ENCODE measurements at regions of chr10 and their contacts with region 1.

Region 1: GRCh38 chr10:13099666-13100348 is at the start of gene OPTN:
- DNase-seq: peak; percentile 82 to 90 (median 84)
- H3K4me3 ChIP-seq: peak within 1 kb of the TSS; percentile 58 to 65
- H3K4me3 Mint-ChIP-seq: peak within 1 kb of the TSS; percentile 89 to 95 (median 94)
- H3K27ac ChIP-seq: peak within 1 kb of the TSS; percentile 98
- H3K27ac Mint-ChIP-seq: peak within 1 kb of the TSS; percentile 95 to 98 (median 97)
- H3K4me1 ChIP-seq: peaks cover 49% of the 10 kb centered on the region
- H3K4me1 Mint-ChIP-seq: peaks cover 40 to 59% (median 48%) of the 10 kb centered on the region in 4 donors
- H3K27me3 ChIP-seq: no peaks in the 10 kb centered on the region
- H3K27me3 Mint-ChIP-seq: no peaks in the 10 kb centered on the region
- total RNA-seq, gene OPTN: 148 TPM

Region 2: GRCh38 chr10:12214763-12215218 is 885.0 kb before region 1 on chr10:
- CTCF ChIA-PET with region 1: no interaction called
- POLR2A ChIA-PET with region 1: no interaction called
- intact Hi-C with region 1: loop called (anchors 5 kb)
- DNase-seq: peak; percentile 45 to 54 (median 53)
- H3K4me3 ChIP-seq: no peak overlapping the region
- H3K4me3 Mint-ChIP-seq: peak overlapping the region; percentile 48 to 79 (median 68)
- H3K27ac ChIP-seq: peak overlapping the region; percentile 22
- H3K27ac Mint-ChIP-seq: peak overlapping the region; percentile 45 to 94 (median 89)
- H3K4me1 ChIP-seq: peaks cover 6% of the 10 kb centered on the region
- H3K4me1 Mint-ChIP-seq: peaks cover 10 to 20% (median 16%) of the 10 kb centered on the region in 4 donors
- H3K27me3 ChIP-seq: no peaks in the 10 kb centered on the region
- H3K27me3 Mint-ChIP-seq: no peaks in the 10 kb centered on the region

Region 3: GRCh38 chr10:12448729-12449391 is 650.9 kb before region 1 on chr10:
- CTCF ChIA-PET with region 1: no interaction called
- POLR2A ChIA-PET with region 1: no interaction called
- intact Hi-C with region 1: loop called (anchors 2 kb)
- DNase-seq: peak; percentile 87 to 94 (median 92)
- H3K4me3 ChIP-seq: peak overlapping the region in 1 of 2 donors; percentile 21
- H3K4me3 Mint-ChIP-seq: peak overlapping the region; percentile 36 to 88 (median 81)
- H3K27ac ChIP-seq: peak overlapping the region; percentile 60
- H3K27ac Mint-ChIP-seq: peak overlapping the region; percentile 89 to 99 (median 99)
- H3K4me1 ChIP-seq: peaks cover 14% of the 10 kb centered on the region
- H3K4me1 Mint-ChIP-seq: peaks cover 28 to 58% (median 41%) of the 10 kb centered on the region in 4 donors
- H3K27me3 ChIP-seq: no peaks in the 10 kb centered on the region
- H3K27me3 Mint-ChIP-seq: no peaks in the 10 kb centered on the region

Region 4: GRCh38 chr10:12782537-12782936 is 317.3 kb before region 1 on chr10:
- CTCF ChIA-PET with region 1: interaction called, 13 read pairs
- POLR2A ChIA-PET with region 1: interaction called, 3 read pairs
- intact Hi-C with region 1: no loop called
- DNase-seq: peak in 2 of 5 donors; percentile 7 to 12
- H3K4me3 ChIP-seq: no peak overlapping the region
- H3K4me3 Mint-ChIP-seq: no peak overlapping the region
- H3K27ac ChIP-seq: no peak overlapping the region
- H3K27ac Mint-ChIP-seq: peak overlapping the region in 2 of 7 donors; percentile 36 to 38
- H3K4me1 ChIP-seq: no peaks in the 10 kb centered on the region
- H3K4me1 Mint-ChIP-seq: peaks cover 5 to 7% (median 6%) of the 10 kb centered on the region in 4 donors
- H3K27me3 ChIP-seq: no peaks in the 10 kb centered on the region
- H3K27me3 Mint-ChIP-seq: no peaks in the 10 kb centered on the region

Region 5: DNA sequence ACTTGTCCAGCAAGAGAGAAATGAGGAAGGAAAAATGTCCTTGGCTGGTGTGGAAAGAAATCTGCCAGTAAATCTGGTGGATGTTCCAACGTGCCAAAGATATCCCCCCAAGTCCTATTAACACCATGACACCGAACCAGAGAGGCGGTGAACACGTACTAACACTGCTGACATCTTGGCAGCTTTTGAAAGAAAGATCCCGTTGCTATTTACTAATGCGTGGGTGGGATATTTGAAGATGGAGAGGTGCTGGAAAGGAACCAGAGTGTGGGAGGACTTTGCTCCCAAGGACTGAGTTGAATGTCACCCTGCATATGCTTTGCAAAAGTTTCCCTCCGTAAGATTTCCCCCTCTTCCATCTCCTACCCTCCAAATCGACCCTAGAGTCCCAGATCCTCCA is 106.2 kb before region 1 on chr10:
- CTCF ChIA-PET with region 1: no interaction called
- POLR2A ChIA-PET with region 1: no interaction called
- intact Hi-C with region 1: no loop called
- DNase-seq: no peak
- H3K4me3 ChIP-seq: no peak overlapping the region
- H3K4me3 Mint-ChIP-seq: no peak overlapping the region
- H3K27ac ChIP-seq: no peak overlapping the region
- H3K27ac Mint-ChIP-seq: no peak overlapping the region
- H3K4me1 ChIP-seq: no peaks in the 10 kb centered on the region
- H3K4me1 Mint-ChIP-seq: no peaks in the 10 kb centered on the region
- H3K27me3 ChIP-seq: no peaks in the 10 kb centered on the region
- H3K27me3 Mint-ChIP-seq: peaks cover 19% of the 10 kb centered on the region in 2 donors

Region 6: DNA sequence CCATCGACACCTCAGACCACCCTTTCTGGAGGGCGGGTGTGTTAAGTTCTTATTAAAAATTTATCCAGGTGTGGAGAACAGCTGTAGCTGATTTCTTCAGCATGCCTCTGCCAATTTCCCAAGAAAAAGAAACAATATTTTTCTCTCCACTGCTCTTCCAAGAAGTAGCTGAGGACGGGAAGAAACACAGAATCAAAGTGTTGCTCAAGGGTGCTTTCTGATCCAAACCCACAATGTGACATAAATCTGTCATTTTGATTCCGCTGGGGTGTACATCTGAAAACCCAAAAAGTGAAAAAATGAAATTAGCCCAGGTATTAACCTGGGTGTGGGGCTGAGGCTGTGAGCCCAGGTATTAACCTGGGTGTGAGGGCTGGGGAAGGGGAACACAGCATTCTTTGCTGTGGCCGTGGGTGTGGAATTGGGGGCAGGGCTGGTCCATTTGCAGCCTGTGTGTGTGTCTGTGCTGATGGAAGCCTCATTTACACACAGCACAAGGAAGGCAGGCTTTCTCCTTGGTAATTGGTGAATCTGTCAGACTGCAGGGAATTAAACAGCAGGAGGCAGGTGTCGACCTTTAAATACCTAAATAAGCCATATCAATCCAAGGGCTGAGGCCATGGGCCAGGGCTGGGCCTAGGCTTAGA is 49.9 kb before region 1 on chr10:
- CTCF ChIA-PET with region 1: no interaction called
- POLR2A ChIA-PET with region 1: no interaction called
- intact Hi-C with region 1: no loop called
- DNase-seq: no peak
- H3K4me3 ChIP-seq: no peak overlapping the region
- H3K4me3 Mint-ChIP-seq: no peak overlapping the region
- H3K27ac ChIP-seq: no peak overlapping the region
- H3K27ac Mint-ChIP-seq: peak overlapping the region in 1 of 7 donors; percentile 32
- H3K4me1 ChIP-seq: no peaks in the 10 kb centered on the region
- H3K4me1 Mint-ChIP-seq: no peaks in the 10 kb centered on the region
- H3K27me3 ChIP-seq: no peaks in the 10 kb centered on the region
- H3K27me3 Mint-ChIP-seq: peaks cover 9 to 14% of the 10 kb centered on the region in 2 donors

Region 7: GRCh38 chr10:13115832-13116803 is 16.3 kb after region 1 on chr10:
- CTCF ChIA-PET with region 1: interaction called, 14 read pairs
- POLR2A ChIA-PET with region 1: interaction called, 8 read pairs
- intact Hi-C with region 1: no loop called
- DNase-seq: peak; percentile 23 to 50 (median 47)
- H3K4me3 ChIP-seq: no peak overlapping the region
- H3K4me3 Mint-ChIP-seq: peak overlapping the region; percentile 54 to 84 (median 78)
- H3K27ac ChIP-seq: peak overlapping the region; percentile 54
- H3K27ac Mint-ChIP-seq: peak overlapping the region; percentile 76 to 94 (median 92)
- H3K4me1 ChIP-seq: peaks cover 18% of the 10 kb centered on the region
- H3K4me1 Mint-ChIP-seq: peaks cover 19 to 37% (median 27%) of the 10 kb centered on the region in 4 donors
- H3K27me3 ChIP-seq: no peaks in the 10 kb centered on the region
- H3K27me3 Mint-ChIP-seq: no peaks in the 10 kb centered on the region

Region 8: DNA sequence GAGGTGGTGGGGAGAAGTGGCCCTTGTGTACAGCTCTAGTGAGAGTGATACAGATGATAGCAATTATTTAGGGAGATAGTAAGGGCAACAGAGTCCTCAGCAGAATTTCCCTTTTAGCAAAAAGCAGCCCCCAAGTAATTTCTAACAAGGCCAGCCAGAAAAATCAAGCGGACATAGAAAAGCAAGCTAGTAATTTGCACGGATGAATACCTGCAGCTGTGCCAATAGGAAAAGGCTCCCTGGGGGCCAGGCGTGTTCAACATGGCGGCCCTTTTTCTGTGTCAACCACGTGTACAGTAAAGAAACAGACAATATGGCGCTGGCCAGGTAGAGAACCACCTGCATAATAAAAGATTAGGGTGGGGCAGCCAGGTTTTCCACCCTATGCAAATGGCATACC is 69.0 kb after region 1 on chr10:
- CTCF ChIA-PET with region 1: no interaction called
- POLR2A ChIA-PET with region 1: no interaction called
- intact Hi-C with region 1: no loop called
- DNase-seq: no peak
- H3K4me3 ChIP-seq: no peak overlapping the region
- H3K4me3 Mint-ChIP-seq: no peak overlapping the region
- H3K27ac ChIP-seq: no peak overlapping the region
- H3K27ac Mint-ChIP-seq: no peak overlapping the region
- H3K4me1 ChIP-seq: no peaks in the 10 kb centered on the region
- H3K4me1 Mint-ChIP-seq: peaks cover 0 to 11% (median 6%) of the 10 kb centered on the region in 4 donors
- H3K27me3 ChIP-seq: no peaks in the 10 kb centered on the region
- H3K27me3 Mint-ChIP-seq: no peaks in the 10 kb centered on the region

Region 9: GRCh38 chr10:13299437-13300287 is 199.9 kb after region 1 on chr10 and contains the start of gene PHYH:
- CTCF ChIA-PET with region 1: interaction called, 17 read pairs
- POLR2A ChIA-PET with region 1: interaction called, 41 read pairs
- intact Hi-C with region 1: loop called (anchors 1 kb)
- DNase-seq: peak; percentile 80 to 86 (median 82)
- H3K4me3 ChIP-seq: peak within 1 kb of the TSS; percentile 36 to 57
- H3K4me3 Mint-ChIP-seq: peak within 1 kb of the TSS; percentile 85 to 90 (median 86)
- H3K27ac ChIP-seq: peak within 1 kb of the TSS; percentile 88
- H3K27ac Mint-ChIP-seq: peak within 1 kb of the TSS; percentile 88 to 100 (median 96)
- H3K4me1 ChIP-seq: peaks cover 28% of the 10 kb centered on the region
- H3K4me1 Mint-ChIP-seq: peaks cover 8 to 30% (median 20%) of the 10 kb centered on the region in 4 donors
- H3K27me3 ChIP-seq: no peaks in the 10 kb centered on the region
- H3K27me3 Mint-ChIP-seq: no peaks in the 10 kb centered on the region
- total RNA-seq, gene PHYH: 8.7 to 10.2 TPM

Region 10: GRCh38 chr10:13586676-13587355 is 487.0 kb after region 1 on chr10 and contains the start of gene PRPF18:
- CTCF ChIA-PET with region 1: no interaction called
- POLR2A ChIA-PET with region 1: no interaction called
- intact Hi-C with region 1: loop called (anchors 10 kb)
- DNase-seq: peak; percentile 91 to 95 (median 92)
- H3K4me3 ChIP-seq: peak within 1 kb of the TSS; percentile 88 to 95
- H3K4me3 Mint-ChIP-seq: peak within 1 kb of the TSS; percentile 98 to 100 (median 100)
- H3K27ac ChIP-seq: peak within 1 kb of the TSS; percentile 65
- H3K27ac Mint-ChIP-seq: peak within 1 kb of the TSS; percentile 72 to 100 (median 100)
- H3K4me1 ChIP-seq: peaks cover 24% of the 10 kb centered on the region
- H3K4me1 Mint-ChIP-seq: peaks cover 24 to 49% (median 34%) of the 10 kb centered on the region in 4 donors
- H3K27me3 ChIP-seq: no peaks in the 10 kb centered on the region
- H3K27me3 Mint-ChIP-seq: peaks cover 11 to 21% of the 10 kb centered on the region in 2 donors
- total RNA-seq, gene PRPF18: 30.3 TPM